ENCODE measurements at regions of chr1 and their contacts with region 1.

Region 1: DNA sequence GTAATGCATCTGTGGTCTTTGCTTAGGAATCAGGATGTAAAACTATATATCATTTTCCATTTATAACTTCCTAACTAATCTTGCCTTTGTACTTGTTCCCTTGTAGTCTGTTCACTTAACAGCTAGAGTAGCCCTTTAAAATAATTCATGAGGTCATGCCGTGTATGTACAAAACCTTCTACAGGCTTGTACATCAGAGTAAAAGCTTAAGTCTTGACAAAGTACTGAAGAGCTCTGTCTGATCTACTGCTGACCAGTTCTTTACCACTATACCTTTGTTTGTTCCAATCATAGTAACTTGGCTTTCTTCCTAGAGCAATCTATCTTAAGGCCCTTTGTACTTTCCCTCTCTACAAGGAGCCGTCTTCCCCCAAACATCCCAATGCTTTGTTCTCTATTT is 90.7 kb upstream of the KIAA1614 start:
- DNase-seq: no peak
- H3K4me3 Mint-ChIP-seq: no peak overlapping the region
- H3K27ac Mint-ChIP-seq: no peak overlapping the region
- H3K4me1 Mint-ChIP-seq: peaks cover 2% of the 10 kb centered on the region
- H3K27me3 Mint-ChIP-seq: no peaks in the 10 kb centered on the region
- CTCF ChIP-seq: no peak

Region 2: DNA sequence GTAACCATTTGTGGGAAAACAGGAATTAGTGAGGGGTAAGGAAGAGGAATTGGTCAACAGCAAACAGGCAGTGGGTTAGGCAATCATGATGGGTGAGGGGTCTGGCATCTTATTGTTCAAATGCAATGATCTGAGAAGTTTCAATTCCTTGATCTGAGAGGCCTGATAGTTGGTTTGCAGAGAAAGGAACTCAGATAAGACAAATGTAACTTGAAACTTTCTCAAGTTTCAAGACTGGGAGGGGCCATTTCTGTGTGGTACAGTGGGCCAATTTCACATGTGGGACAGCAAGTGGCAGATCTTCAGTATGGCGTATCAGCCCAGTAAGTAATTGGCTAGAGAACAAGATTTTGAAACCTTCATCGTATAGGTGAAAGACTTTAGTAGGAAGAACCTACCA is 87.6 kb before region 1 on chr1:
- CTCF ChIA-PET with region 1: no interaction called
- POLR2A ChIA-PET with region 1: no interaction called
- intact Hi-C with region 1: no loop called
- DNase-seq: no peak
- H3K4me3 Mint-ChIP-seq: no peak overlapping the region
- H3K27ac Mint-ChIP-seq: no peak overlapping the region
- H3K4me1 Mint-ChIP-seq: no peaks in the 10 kb centered on the region
- H3K27me3 Mint-ChIP-seq: no peaks in the 10 kb centered on the region
- CTCF ChIP-seq: no peak

Region 3: GRCh38 chr1:180765151-180765550 is 56.8 kb before region 1 on chr1:
- CTCF ChIA-PET with region 1: no interaction called
- POLR2A ChIA-PET with region 1: no interaction called
- intact Hi-C with region 1: no loop called
- DNase-seq: no peak
- H3K4me3 Mint-ChIP-seq: no peak overlapping the region
- H3K27ac Mint-ChIP-seq: no peak overlapping the region
- H3K4me1 Mint-ChIP-seq: no peaks in the 10 kb centered on the region
- H3K27me3 Mint-ChIP-seq: no peaks in the 10 kb centered on the region
- CTCF ChIP-seq: no peak

Region 4: DNA sequence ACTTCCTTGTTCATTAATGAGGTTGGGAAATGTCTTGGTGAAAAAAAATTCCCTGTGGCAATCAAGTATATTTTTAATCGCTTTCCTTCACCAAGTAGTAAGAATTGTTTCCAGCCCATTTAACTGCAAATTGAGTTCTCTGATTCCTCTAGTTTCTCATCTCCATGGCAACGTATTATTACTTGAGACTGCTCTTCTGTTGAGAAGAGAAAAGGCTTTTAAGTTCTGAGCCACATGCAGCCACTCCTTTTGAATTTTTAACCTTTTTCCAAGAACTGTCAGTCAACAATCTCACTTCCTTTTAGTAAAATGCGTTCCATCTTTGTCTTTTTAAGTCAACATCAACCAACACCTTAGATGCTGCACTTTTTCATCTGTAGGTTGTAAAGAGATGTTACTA is 15.1 kb after region 1 on chr1:
- CTCF ChIA-PET with region 1: no interaction called
- POLR2A ChIA-PET with region 1: interaction called, 10 read pairs
- intact Hi-C with region 1: no loop called
- DNase-seq: no peak
- H3K4me3 Mint-ChIP-seq: no peak overlapping the region
- H3K27ac Mint-ChIP-seq: no peak overlapping the region
- H3K4me1 Mint-ChIP-seq: no peaks in the 10 kb centered on the region
- H3K27me3 Mint-ChIP-seq: no peaks in the 10 kb centered on the region
- CTCF ChIP-seq: no peak